Activated B cell treated with CpG ODN at 0.5 μM for 24 hours (primary cell): ENCODE measurements at regions of chr11 and their contacts with region 1.

Region 1: DNA sequence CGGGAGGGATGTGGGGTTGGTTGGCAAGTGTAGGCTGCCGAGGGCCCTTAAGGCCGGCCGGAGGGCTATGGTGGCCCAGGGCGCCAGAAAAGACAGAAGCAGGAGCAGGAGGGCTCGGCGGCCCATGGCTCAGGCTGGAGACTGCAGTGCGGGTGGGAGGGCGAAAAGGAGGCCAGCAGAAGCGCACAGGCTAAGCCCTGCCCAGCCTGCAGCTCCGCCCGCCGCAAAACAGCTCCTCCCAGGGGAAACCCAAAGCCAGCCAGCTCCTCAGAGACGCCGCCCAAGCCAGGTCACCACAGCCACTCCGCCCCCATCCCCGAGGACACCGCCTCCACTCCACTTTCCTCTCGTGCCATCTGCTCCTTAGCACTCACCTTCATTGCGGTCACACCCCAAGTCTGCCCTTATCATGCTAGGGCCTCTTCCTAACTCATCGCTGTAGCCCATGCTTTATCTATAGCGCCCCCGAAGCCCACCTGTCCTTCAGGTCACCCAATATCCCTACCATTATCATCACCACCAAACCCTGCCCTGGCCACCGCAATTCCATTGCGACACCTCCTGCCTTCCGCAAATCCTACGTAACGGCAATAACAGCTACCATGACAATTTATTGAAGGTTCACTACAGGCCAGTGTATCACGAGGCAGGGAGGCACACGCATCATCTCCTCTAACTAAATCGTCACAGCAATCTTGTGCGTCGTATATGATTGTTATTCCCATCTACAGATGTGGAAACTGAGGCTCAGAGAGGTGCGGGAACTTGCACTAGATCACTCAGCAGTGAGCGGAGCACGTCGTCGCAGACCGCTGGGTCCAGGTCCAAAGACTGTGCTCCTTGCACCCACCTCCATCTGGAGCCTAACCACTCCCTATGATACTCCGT is at the start of gene PRCP:
- DNase-seq: peak; percentile 78
- ATAC-seq: peak; percentile 75
- H3K4me3 Mint-ChIP-seq: peak within 1 kb of the TSS; percentile 100
- H3K27ac Mint-ChIP-seq: peak within 1 kb of the TSS; percentile 99
- H3K4me1 Mint-ChIP-seq: peaks cover 57% of the 10 kb centered on the region
- H3K27me3 Mint-ChIP-seq: no peaks in the 10 kb centered on the region
- CTCF ChIP-seq: no peak
- total RNA-seq, gene PRCP: 29.8 and 34.8 TPM in 2 replicates

Region 2: GRCh38 chr11:82889133-82890001 is 11.2 kb before region 1 on chr11:
- CTCF ChIA-PET with region 1: interaction called, 5 read pairs
- POLR2A ChIA-PET with region 1: interaction called, 12 read pairs
- intact Hi-C with region 1: no loop called
- DNase-seq: no peak
- ATAC-seq: peak; percentile 64
- H3K4me3 Mint-ChIP-seq: no peak overlapping the region
- H3K27ac Mint-ChIP-seq: no peak overlapping the region
- H3K4me1 Mint-ChIP-seq: peaks cover 22% of the 10 kb centered on the region
- H3K27me3 Mint-ChIP-seq: no peaks in the 10 kb centered on the region
- CTCF ChIP-seq: no peak

Region 3: DNA sequence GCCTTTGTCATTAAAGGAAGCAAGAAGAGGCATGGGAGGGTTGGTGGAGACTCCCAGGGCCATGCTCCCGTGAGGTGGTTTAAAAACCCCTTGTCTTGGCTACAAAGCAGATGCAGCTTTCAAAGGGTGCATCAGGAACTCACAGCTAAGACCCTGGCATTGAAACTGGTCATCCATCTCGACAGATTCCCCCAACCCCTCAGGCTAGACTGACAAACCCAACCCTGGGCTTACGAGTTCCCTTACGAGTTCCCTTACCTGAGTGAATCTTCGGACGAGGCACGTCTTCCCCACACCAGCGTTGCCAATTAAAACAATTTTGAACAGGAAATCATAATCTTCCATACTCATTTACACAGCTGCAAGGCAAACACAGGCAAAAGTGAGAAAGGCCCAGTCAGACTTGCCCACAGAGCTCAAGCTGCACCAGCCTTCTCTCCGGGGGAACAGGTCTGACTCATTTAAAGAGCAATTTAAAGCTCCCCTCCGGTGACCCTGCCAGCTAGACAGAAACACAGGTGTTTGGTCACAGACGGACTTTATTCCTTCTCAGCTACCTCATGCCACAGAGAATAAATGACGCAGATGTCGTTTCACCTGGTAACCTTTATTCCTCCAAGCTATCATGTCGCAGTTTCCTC is 96.6 kb after region 1 on chr11:
- CTCF ChIA-PET with region 1: no interaction called
- POLR2A ChIA-PET with region 1: interaction called, 14 read pairs
- intact Hi-C with region 1: loop called (anchors 1 kb)
- DNase-seq: no peak
- ATAC-seq: peak; percentile 88
- H3K4me3 Mint-ChIP-seq: peak overlapping the region; percentile 75
- H3K27ac Mint-ChIP-seq: peak overlapping the region; percentile 84
- H3K4me1 Mint-ChIP-seq: peaks cover 93% of the 10 kb centered on the region
- H3K27me3 Mint-ChIP-seq: no peaks in the 10 kb centered on the region
- CTCF ChIP-seq: no peak

Region 4: GRCh38 chr11:83285771-83286528 is 385.4 kb after region 1 on chr11 and contains the start of gene CCDC90B:
- CTCF ChIA-PET with region 1: interaction called, 7 read pairs
- POLR2A ChIA-PET with region 1: interaction called, 31 read pairs
- intact Hi-C with region 1: loop called (anchors 1 kb)
- DNase-seq: peak; percentile 86
- ATAC-seq: peak; percentile 88
- H3K4me3 Mint-ChIP-seq: peak within 1 kb of the TSS; percentile 99
- H3K27ac Mint-ChIP-seq: peak within 1 kb of the TSS; percentile 100
- H3K4me1 Mint-ChIP-seq: peaks cover 61% of the 10 kb centered on the region
- H3K27me3 Mint-ChIP-seq: no peaks in the 10 kb centered on the region
- CTCF ChIP-seq: no peak
- total RNA-seq, gene CCDC90B: 25.8 and 29.2 TPM in 2 replicates